AG04449 (cell line): ENCODE measurements at regions of chr16 and their contacts with region 1.

Region 1: GRCh38 chr16:22190776-22191531 is 15.1 kb upstream of the EEF2K start:
- DNase-seq: peak; percentile 97
- H3K4me3 ChIP-seq: peak overlapping the region; percentile 69
- CTCF ChIP-seq: no peak

Region 2: GRCh38 chr16:21952793-21953540 is 238.0 kb before region 1 on chr16 and contains the start of gene UQCRC2:
- CTCF ChIA-PET with region 1: interaction called, 37 read pairs
- POLR2A ChIA-PET with region 1: no interaction called
- DNase-seq: peak; percentile 62
- H3K4me3 ChIP-seq: peak within 1 kb of the TSS; percentile 85
- CTCF ChIP-seq: no peak

Region 3: DNA sequence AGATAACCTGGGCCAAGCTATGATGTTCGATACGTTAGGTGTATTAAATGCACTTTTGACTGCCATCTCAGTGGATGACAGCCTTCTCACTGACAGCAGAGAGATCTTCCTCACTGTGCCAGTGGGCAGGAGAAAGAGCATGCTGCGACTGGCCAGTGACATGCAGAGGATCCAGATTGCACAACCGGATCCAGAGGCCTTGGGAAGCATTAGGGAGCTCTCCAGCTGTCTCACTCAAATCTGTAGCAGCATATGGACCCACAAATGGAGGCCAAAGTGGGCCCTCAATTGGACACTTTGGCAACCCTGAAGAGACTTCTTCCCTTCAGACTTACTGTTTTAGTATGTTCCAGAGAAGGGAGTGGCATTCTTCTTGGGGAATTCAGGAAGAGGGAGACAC is 210.9 kb before region 1 on chr16:
- CTCF ChIA-PET with region 1: interaction called, 13 read pairs
- POLR2A ChIA-PET with region 1: no interaction called
- DNase-seq: no peak
- H3K4me3 ChIP-seq: no peak overlapping the region
- CTCF ChIP-seq: no peak

Region 4: DNA sequence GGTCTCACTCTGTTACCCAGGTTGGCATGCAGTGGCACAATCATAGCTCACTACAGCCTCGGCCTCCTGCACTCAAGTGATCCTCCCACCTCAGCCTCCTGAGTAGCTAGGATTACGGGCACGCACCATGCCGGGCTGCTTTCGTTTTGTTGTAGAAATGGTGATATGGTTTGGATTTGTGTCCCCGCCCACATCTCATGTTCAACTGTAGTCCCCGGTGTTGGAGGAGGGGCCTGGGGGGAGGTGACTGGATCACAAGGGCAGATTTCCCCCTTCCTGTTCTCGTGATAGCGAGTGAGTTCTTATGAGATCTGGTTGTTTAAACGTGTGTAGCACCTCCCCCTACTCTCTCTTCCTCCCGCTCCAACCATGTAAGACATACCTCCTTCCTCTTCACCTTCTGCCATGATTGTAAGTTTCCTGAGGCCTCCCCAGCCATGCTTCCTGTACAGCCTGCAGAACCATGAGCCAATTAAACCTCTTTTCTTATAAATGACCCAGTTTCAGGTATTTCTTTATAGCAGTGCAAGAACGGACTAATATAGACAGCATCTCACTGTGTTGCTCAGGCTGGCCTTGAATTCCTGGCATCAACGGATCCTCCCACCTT is 196.0 kb before region 1 on chr16:
- CTCF ChIA-PET with region 1: interaction called, 272 read pairs
- POLR2A ChIA-PET with region 1: no interaction called
- DNase-seq: no peak
- H3K4me3 ChIP-seq: no peak overlapping the region
- CTCF ChIP-seq: no peak

Region 5: GRCh38 chr16:22091758-22092600 is 99.0 kb before region 1 on chr16 and contains the start of gene VWA3A:
- CTCF ChIA-PET with region 1: interaction called, 13 read pairs
- POLR2A ChIA-PET with region 1: no interaction called
- DNase-seq: peak; percentile 33
- H3K4me3 ChIP-seq: no peak within 1 kb of the TSS
- CTCF ChIP-seq: no peak

Region 6: DNA sequence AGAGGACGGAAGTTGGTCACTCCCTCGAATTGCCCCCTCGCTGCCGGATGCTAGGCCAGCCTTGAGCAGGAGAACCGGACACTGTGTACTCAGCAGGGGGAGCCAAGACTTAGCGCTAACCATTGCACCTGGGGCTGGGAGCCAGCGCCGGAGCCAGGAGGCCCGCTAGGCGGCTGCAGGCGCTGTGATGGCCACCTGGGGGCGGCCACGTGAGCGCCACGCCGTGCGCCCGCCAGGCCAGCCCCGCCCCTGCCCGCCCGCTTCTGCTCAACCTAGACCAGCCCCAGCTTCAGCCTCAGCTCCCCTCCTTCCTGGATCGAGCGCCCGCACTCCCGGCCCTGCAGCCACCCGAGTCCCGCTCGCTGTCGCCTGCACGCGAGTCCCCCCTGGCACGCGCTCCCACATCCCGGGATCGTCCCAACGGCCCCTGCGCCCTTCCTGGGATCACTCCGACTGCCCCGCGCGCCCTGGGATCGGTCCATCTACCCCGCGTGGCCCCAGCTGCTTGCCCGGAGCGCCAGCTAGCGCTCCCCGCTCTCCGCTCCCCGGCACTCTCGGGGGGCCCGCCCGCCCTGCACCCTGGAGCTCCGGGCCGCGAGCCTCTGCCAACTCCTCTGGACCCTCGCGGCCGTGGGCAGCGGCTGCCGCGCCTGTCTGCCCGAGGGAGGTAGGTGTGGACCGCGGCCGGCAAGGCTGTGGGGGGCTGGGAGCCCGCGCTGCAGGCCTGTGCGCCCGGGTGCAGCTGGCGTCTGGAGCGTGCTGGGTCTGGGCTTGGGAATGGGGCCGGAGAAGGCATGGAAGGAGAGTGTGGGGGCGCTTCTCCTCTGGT is 15.3 kb after region 1 on chr16 and contains the start of gene EEF2K:
- CTCF ChIA-PET with region 1: interaction called, 27 read pairs
- POLR2A ChIA-PET with region 1: no interaction called
- DNase-seq: peak; percentile 61
- H3K4me3 ChIP-seq: peak within 1 kb of the TSS; percentile 81
- CTCF ChIP-seq: peak; percentile 89

Region 7: GRCh38 chr16:22217889-22218730 is 27.2 kb after region 1 on chr16:
- CTCF ChIA-PET with region 1: no interaction called
- POLR2A ChIA-PET with region 1: no interaction called
- DNase-seq: no peak
- H3K4me3 ChIP-seq: no peak overlapping the region
- CTCF ChIP-seq: no peak